Activated CD8-positive, alpha-beta T cell treated with anti-CD3 and anti-CD28 coated beads for 36 hours (primary cell): ENCODE measurements at regions of chr11 and their contacts with region 1.

Region 1: DNA sequence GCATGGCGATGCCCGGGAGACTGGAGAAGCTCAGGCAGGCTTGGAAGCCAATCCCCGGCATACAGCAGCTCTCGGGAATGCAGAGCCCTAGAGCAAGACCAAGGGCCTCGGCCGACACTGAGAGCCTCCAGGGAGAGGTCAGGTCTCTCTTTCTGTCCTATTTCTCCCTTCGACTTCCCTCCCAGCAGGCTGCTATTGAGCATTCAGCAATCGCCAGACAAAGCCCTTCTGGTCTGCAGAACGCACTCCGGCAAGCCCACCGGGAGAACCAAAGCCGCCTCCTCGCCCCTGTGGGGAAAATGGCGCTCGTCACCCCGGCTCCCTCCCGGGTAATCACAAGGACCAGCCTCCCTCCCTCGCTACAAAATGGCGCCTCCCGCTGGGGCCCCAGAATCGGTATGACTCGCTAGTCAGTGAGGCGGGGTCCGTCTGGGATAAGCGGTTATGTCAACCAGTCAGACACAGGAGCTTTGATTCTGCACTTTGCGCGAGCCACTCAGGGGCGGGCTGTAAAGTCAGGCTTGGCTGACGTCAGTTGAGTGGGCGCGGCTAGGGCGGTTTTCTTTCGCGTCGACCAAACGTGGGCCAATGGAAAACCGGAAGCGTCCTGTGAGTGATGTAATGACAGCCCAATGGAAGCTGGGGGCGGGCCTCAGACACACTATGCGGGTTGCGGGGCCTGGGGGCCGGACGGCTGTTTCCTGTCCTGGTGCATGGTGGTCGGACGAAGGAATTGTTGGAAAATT is at the start of gene ZNF143:
- DNase-seq: peak; percentile 100
- ATAC-seq: peak; percentile 91
- H3K4me3 Mint-ChIP-seq: peak within 1 kb of the TSS; percentile 94
- H3K27ac Mint-ChIP-seq: peak within 1 kb of the TSS; percentile 98
- H3K4me1 Mint-ChIP-seq: peaks cover 22% of the 10 kb centered on the region
- H3K27me3 Mint-ChIP-seq: no peaks in the 10 kb centered on the region
- CTCF ChIP-seq: no peak
- total RNA-seq, gene ZNF143: 26.5 to 33.7 TPM

Region 2: DNA sequence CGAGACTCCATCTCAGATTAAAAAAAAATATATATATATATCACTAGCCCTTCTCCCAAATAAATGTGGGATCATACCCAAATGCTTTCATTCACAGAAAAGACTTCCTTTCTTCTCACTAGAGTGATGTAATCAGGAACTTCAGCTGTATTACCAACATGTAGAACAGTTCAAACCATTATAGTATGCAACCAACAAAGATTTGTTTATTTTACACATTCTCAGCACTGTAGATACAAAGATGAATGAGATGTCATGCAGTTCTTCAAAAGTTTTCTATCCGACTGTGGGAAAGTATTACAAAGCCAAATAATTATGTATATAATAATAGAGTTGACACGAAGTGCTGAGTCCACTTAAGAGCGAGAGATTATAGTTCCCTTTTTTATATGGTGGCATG is 21.9 kb before region 1 on chr11:
- CTCF ChIA-PET with region 1: no interaction called
- POLR2A ChIA-PET with region 1: interaction called, 14 read pairs
- intact Hi-C with region 1: no loop called
- DNase-seq: no peak
- ATAC-seq: no peak
- H3K4me3 Mint-ChIP-seq: no peak overlapping the region
- H3K27ac Mint-ChIP-seq: no peak overlapping the region
- H3K4me1 Mint-ChIP-seq: no peaks in the 10 kb centered on the region
- H3K27me3 Mint-ChIP-seq: no peaks in the 10 kb centered on the region
- CTCF ChIP-seq: no peak

Region 3: DNA sequence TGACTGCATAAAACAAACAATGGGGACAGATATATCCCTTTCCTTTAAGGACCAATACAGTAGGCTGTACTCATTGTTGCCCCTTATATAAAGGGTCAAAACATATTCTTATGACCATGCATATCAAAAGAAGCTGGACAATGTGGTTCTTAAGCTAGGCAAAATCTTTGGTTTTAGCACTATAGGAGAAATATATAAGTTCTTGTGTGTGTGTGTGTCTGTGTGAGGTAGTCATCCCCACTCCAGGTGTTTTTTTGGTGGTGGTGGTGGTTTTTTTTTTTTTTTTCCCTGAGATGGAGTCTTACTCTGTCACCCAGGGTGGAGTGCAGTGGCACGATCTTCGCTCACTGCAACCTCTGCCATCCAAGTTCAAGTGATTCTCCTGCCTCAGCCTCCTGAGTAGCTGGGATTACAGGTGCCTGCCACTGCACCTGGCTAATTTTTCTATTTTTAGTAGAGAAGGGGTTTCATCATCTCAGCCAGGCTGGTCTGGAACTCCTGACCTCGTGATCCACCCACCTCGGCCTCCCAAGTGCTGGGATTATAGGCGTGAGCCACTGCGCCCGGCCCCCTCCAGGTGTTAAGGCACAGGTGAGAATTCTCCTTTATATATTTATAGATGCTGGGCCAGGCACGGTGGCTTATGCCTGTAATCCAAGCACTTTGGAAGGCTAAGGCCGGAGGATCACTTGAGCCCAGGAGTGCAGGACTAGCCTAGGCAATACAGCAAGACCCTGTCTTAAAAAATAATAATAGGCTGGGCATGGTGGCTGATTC is 11.7 kb before region 1 on chr11:
- CTCF ChIA-PET with region 1: no interaction called
- POLR2A ChIA-PET with region 1: interaction called, 20 read pairs
- intact Hi-C with region 1: no loop called
- DNase-seq: no peak
- ATAC-seq: no peak
- H3K4me3 Mint-ChIP-seq: no peak overlapping the region
- H3K27ac Mint-ChIP-seq: no peak overlapping the region
- H3K4me1 Mint-ChIP-seq: no peaks in the 10 kb centered on the region
- H3K27me3 Mint-ChIP-seq: no peaks in the 10 kb centered on the region
- CTCF ChIP-seq: no peak

Region 4: GRCh38 chr11:9473408-9473807 is 12.9 kb after region 1 on chr11:
- CTCF ChIA-PET with region 1: no interaction called
- POLR2A ChIA-PET with region 1: interaction called, 37 read pairs
- intact Hi-C with region 1: no loop called
- DNase-seq: no peak
- ATAC-seq: no peak
- H3K4me3 Mint-ChIP-seq: no peak overlapping the region
- H3K27ac Mint-ChIP-seq: no peak overlapping the region
- H3K4me1 Mint-ChIP-seq: peaks cover 5% of the 10 kb centered on the region
- H3K27me3 Mint-ChIP-seq: no peaks in the 10 kb centered on the region
- CTCF ChIP-seq: no peak

Region 5: GRCh38 chr11:9479899-9480298 is 19.4 kb after region 1 on chr11:
- CTCF ChIA-PET with region 1: no interaction called
- POLR2A ChIA-PET with region 1: interaction called, 37 read pairs
- intact Hi-C with region 1: no loop called
- DNase-seq: no peak
- ATAC-seq: no peak
- H3K4me3 Mint-ChIP-seq: no peak overlapping the region
- H3K27ac Mint-ChIP-seq: peak overlapping the region; percentile 52
- H3K4me1 Mint-ChIP-seq: no peaks in the 10 kb centered on the region
- H3K27me3 Mint-ChIP-seq: no peaks in the 10 kb centered on the region
- CTCF ChIP-seq: no peak

Region 6: GRCh38 chr11:9573052-9573774 is 112.7 kb after region 1 on chr11 and contains the start of gene WEE1:
- CTCF ChIA-PET with region 1: no interaction called
- POLR2A ChIA-PET with region 1: interaction called, 17 read pairs
- intact Hi-C with region 1: no loop called
- DNase-seq: peak; percentile 98
- ATAC-seq: peak; percentile 96
- H3K4me3 Mint-ChIP-seq: peak within 1 kb of the TSS; percentile 83
- H3K27ac Mint-ChIP-seq: peak within 1 kb of the TSS; percentile 81
- H3K4me1 Mint-ChIP-seq: peaks cover 18% of the 10 kb centered on the region
- H3K27me3 Mint-ChIP-seq: peaks cover 8% of the 10 kb centered on the region
- CTCF ChIP-seq: no peak
- total RNA-seq, gene WEE1: 45.2 to 49.2 TPM